Posterior vena cava (tissue), 2 donors: ENCODE measurements at regions of chr1 and their contacts with region 1.

Region 1: GRCh38 chr1:240073097-240073496 is 18.6 kb upstream of the FMN2 start:
- DNase-seq: no peak

Region 2: DNA sequence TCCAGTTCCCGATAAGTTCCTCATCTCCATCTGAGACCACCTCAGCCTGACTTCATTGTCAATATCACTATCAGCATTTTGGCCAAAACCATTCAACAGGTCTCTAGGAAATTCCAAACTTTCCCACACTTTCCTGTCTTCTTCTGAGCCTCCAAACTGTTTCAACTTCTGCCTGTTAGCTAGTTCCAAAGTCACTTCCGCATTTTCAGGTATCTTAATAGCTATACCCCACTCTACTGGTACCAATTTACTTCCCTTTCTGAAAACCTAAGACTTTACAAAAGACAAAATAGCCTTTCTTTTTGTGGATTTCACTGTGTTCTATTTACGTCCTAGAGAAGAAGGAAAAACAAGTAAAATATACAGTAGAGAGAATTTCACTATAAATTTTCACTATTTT is 128.4 kb before region 1 on chr1:
- intact Hi-C with region 1: no loop called
- DNase-seq: no peak

Region 3: DNA sequence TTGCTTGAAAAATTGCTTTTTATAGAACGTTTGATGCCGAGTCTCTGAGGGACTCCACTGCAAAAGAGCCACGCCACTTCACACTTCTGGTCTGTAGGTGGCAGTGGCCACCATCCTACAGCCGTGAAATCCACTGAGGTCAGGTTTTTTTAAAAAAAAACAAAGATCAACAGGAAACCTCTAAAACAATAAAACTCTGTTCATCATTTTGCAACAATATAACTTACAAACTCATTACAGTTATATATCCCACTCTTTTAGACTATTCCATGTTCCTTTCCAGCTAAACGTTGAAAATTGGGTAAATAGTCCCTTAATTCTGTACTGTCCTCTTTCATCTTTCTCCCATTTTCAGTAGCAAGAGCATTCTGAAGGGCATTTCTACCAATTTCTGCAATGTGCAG is 46.0 kb before region 1 on chr1:
- intact Hi-C with region 1: no loop called
- DNase-seq: no peak

Region 4: GRCh38 chr1:240122639-240123613 is 49.8 kb after region 1 on chr1:
- intact Hi-C with region 1: loop called in 1 of 2 experiments (anchors 1 kb)
- DNase-seq: no peak

Region 5: GRCh38 chr1:240765732-240766363 is 692.8 kb after region 1 on chr1:
- intact Hi-C with region 1: no loop called
- DNase-seq: no peak